CD14-positive monocyte (primary cell): ENCODE measurements at regions of chr16 and their contacts with region 1.

Region 1: GRCh38 chr16:75764154-75764768 is 38.0 kb upstream of the CPHXL start:
- DNase-seq: peak in 2 of 3 donors; percentile 16 to 23
- H3K4me3 ChIP-seq: no peak overlapping the region
- H3K4me3 Mint-ChIP-seq: no peak overlapping the region
- H3K27ac ChIP-seq: no peak overlapping the region
- H3K27ac Mint-ChIP-seq: no peak overlapping the region
- H3K4me1 ChIP-seq: no peaks in the 10 kb centered on the region
- H3K4me1 Mint-ChIP-seq: peaks cover 1% of the 10 kb centered on the region
- H3K27me3 ChIP-seq: peaks cover 0 to 2% of the 10 kb centered on the region in 2 donors
- H3K27me3 Mint-ChIP-seq: peaks cover 0 to 9% (median 0%) of the 10 kb centered on the region in 3 donors
- CTCF ChIP-seq: peak; percentile 64

Region 2: DNA sequence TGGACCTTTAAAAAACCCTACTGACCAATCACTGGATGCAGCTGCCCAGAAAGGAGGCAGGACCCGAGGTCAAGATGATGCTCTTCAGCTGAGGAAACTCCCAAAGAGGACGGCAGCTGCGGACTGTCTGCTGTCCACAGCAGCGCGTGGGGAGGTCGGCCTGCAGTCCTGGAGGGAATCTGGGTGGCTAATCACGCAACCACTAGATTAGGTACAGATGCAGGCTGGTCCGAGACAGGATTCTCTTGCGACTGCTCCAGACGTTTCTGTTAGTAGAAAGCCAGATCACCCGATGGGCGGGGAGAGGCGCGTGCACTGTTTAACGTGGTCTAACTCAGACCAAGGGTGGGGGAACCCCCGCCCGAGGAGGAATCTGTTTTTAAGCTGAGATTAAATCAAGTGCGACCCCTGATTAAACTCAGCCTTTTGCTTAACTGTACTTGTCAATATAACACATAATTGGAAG is 566.1 kb before region 1 on chr16:
- intact Hi-C with region 1: loop called (anchors 5 to 10 kb)
- DNase-seq: no peak
- H3K4me3 ChIP-seq: no peak overlapping the region
- H3K4me3 Mint-ChIP-seq: peak overlapping the region in 1 of 2 donors; percentile 63
- H3K27ac ChIP-seq: no peak overlapping the region
- H3K27ac Mint-ChIP-seq: no peak overlapping the region
- H3K4me1 ChIP-seq: no peaks in the 10 kb centered on the region
- H3K4me1 Mint-ChIP-seq: peaks cover 4% of the 10 kb centered on the region
- H3K27me3 ChIP-seq: peaks cover 14 to 51% of the 10 kb centered on the region in 2 donors
- H3K27me3 Mint-ChIP-seq: peaks cover 72 to 92% (median 75%) of the 10 kb centered on the region in 3 donors
- CTCF ChIP-seq: no peak

Region 3: GRCh38 chr16:75238132-75238852 is 526.0 kb before region 1 on chr16:
- intact Hi-C with region 1: loop called in 1 of 2 experiments (anchors 10 kb)
- DNase-seq: no peak
- H3K4me3 ChIP-seq: no peak overlapping the region
- H3K4me3 Mint-ChIP-seq: no peak overlapping the region
- H3K27ac ChIP-seq: no peak overlapping the region
- H3K27ac Mint-ChIP-seq: no peak overlapping the region
- H3K4me1 ChIP-seq: no peaks in the 10 kb centered on the region
- H3K4me1 Mint-ChIP-seq: no peaks in the 10 kb centered on the region
- H3K27me3 ChIP-seq: peaks cover 2 to 84% of the 10 kb centered on the region in 2 donors
- H3K27me3 Mint-ChIP-seq: peaks cover 54 to 99% (median 73%) of the 10 kb centered on the region in 3 donors
- CTCF ChIP-seq: no peak

Region 4: GRCh38 chr16:75632857-75633256 is 131.4 kb before region 1 on chr16:
- intact Hi-C with region 1: no loop called
- DNase-seq: no peak
- H3K4me3 ChIP-seq: no peak overlapping the region
- H3K4me3 Mint-ChIP-seq: no peak overlapping the region
- H3K27ac ChIP-seq: no peak overlapping the region
- H3K27ac Mint-ChIP-seq: no peak overlapping the region
- H3K4me1 ChIP-seq: no peaks in the 10 kb centered on the region
- H3K4me1 Mint-ChIP-seq: peaks cover 4% of the 10 kb centered on the region
- H3K27me3 ChIP-seq: no peaks in the 10 kb centered on the region
- H3K27me3 Mint-ChIP-seq: no peaks in the 10 kb centered on the region
- CTCF ChIP-seq: no peak

Region 5: GRCh38 chr16:75710344-75710743 is 53.9 kb before region 1 on chr16:
- intact Hi-C with region 1: no loop called
- DNase-seq: no peak
- H3K4me3 ChIP-seq: no peak overlapping the region
- H3K4me3 Mint-ChIP-seq: no peak overlapping the region
- H3K27ac ChIP-seq: no peak overlapping the region
- H3K27ac Mint-ChIP-seq: no peak overlapping the region
- H3K4me1 ChIP-seq: no peaks in the 10 kb centered on the region
- H3K4me1 Mint-ChIP-seq: no peaks in the 10 kb centered on the region
- H3K27me3 ChIP-seq: no peaks in the 10 kb centered on the region
- H3K27me3 Mint-ChIP-seq: peaks cover 0 to 2% (median 1%) of the 10 kb centered on the region in 3 donors
- CTCF ChIP-seq: no peak

Region 6: GRCh38 chr16:75727221-75727620 is 37.0 kb before region 1 on chr16:
- intact Hi-C with region 1: no loop called
- DNase-seq: no peak
- H3K4me3 ChIP-seq: no peak overlapping the region
- H3K4me3 Mint-ChIP-seq: no peak overlapping the region
- H3K27ac ChIP-seq: no peak overlapping the region
- H3K27ac Mint-ChIP-seq: no peak overlapping the region
- H3K4me1 ChIP-seq: no peaks in the 10 kb centered on the region
- H3K4me1 Mint-ChIP-seq: no peaks in the 10 kb centered on the region
- H3K27me3 ChIP-seq: no peaks in the 10 kb centered on the region
- H3K27me3 Mint-ChIP-seq: peaks cover 0 to 4% (median 3%) of the 10 kb centered on the region in 3 donors
- CTCF ChIP-seq: no peak

Region 7: GRCh38 chr16:75787440-75787839 is 23.2 kb after region 1 on chr16:
- intact Hi-C with region 1: no loop called
- DNase-seq: no peak
- H3K4me3 ChIP-seq: no peak overlapping the region
- H3K4me3 Mint-ChIP-seq: no peak overlapping the region
- H3K27ac ChIP-seq: no peak overlapping the region
- H3K27ac Mint-ChIP-seq: no peak overlapping the region
- H3K4me1 ChIP-seq: no peaks in the 10 kb centered on the region
- H3K4me1 Mint-ChIP-seq: no peaks in the 10 kb centered on the region
- H3K27me3 ChIP-seq: peaks cover 0 to 11% of the 10 kb centered on the region in 2 donors
- H3K27me3 Mint-ChIP-seq: peaks cover 5 to 22% (median 8%) of the 10 kb centered on the region in 3 donors
- CTCF ChIP-seq: no peak